Left cardiac atrium (tissue), 4 donors: ENCODE measurements at regions of chr20 and their contacts with region 1.

Region 1: GRCh38 chr20:57611586-57612311 is 8.5 kb downstream of the ZBP1 start:
- DNase-seq: no peak
- ATAC-seq: peak; percentile 35 to 58

Region 2: DNA sequence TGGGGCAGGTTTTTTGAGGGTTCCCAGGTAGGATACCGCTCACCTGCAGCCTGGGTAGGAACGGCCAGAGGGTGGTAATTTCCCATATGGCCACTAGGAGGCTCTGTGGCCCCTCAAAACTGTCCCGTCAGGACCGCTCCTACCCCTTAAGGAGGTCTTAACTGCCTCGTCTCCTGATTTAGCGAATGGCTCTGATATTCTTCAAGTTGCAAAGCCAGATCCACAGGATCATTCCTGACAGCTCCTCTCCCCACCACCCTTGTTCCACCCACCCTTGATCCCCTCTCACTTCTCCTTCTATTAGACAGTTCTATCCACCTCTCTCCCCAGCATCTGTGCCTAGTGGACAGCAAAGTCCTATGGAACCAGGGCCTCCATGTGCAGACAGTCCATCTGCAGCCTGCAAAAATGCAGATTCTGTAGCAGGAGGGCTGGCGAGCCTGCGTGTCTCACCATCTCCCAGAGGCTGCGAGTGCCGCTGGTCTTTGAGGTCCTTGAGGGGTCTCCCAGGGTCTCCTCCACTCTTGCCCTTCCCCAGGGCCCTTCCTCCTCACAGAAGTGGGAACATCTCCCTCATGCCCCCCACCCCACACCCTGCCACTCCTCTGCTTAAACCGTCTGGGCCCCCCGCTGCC is 42.7 kb after region 1 on chr20:
- intact Hi-C with region 1: no loop called
- DNase-seq: no peak
- ATAC-seq: peak; percentile 72 to 80

Region 3: DNA sequence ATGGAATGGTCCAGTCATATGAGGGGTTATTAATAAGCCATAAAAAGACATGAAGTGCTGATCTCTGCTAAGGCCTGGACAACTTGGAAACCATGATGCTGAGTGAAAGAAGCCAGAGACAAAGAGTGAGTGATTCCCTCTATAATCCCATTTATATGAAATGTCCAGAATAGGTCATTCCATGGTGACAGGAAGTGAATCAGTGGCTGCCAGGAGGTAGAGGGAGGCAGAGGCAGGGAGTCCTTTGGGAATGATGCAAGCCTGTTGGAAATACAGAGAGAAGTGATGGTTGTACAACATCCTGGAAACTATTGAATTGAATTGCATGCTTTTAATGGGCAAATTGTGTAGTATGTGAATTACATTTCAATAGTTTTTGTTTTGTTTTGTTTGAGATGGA is 590.3 kb after region 1 on chr20:
- intact Hi-C with region 1: loop called in 1 of 2 experiments (anchors 5 kb)
- DNase-seq: no peak
- ATAC-seq: no peak